Heart right ventricle (tissue), 16 donors: ENCODE measurements at regions of chr5 and their contacts with region 1.

Region 1: DNA sequence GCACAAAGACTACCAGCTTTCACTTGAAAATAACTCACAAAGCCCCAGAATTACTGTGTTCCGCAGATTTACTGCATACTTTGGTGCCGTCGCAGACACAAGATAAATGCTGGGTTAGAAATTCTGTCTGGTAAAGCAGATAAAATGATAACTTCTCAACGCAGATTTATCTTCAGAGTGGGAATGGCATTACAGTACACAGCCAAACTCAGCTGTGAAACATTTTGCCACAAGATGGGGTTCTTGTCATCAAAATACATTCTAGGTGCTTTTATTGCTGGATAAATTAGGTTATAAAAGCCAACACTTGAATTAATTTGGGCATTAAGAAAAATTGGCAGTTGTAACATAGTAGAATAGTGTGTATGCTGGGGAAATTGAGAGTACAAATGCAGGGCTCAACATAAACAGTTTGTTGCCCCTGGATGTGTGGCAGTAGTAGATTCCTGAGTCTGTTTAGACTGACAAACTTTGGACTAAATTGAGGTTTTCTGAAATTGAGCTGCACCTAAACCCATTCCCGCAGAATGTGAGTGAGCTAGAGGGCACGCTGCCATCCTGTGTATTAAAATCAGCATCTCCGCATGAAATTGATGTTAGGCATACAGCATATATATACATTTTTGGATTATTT is 61.1 kb downstream of the LMNB1 start:
- DNase-seq: no peak
- ATAC-seq: peak in 5 of 8 donors; percentile 50 to 55 (median 53)
- H3K4me3 ChIP-seq: no peak overlapping the region
- H3K27ac ChIP-seq: no peak overlapping the region
- H3K4me1 ChIP-seq: no peaks in the 10 kb centered on the region
- H3K27me3 ChIP-seq: no peaks in the 10 kb centered on the region
- CTCF ChIP-seq: peak in 8 of 9 donors; percentile 17 to 74 (median 64)

Region 2: GRCh38 chr5:126875303-126875785 is 37.3 kb after region 1 on chr5:
- intact Hi-C with region 1: no loop called
- DNase-seq: no peak
- ATAC-seq: peak in 3 of 8 donors; percentile 40 to 55 (median 53)
- H3K4me3 ChIP-seq: no peak overlapping the region
- H3K27ac ChIP-seq: peak overlapping the region in 1 of 10 donors; percentile 8
- H3K4me1 ChIP-seq: peaks cover 0 to 28% (median 4%) of the 10 kb centered on the region in 9 donors
- H3K27me3 ChIP-seq: no peaks in the 10 kb centered on the region
- CTCF ChIP-seq: no peak

Region 3: GRCh38 chr5:127014573-127014972 is 176.6 kb after region 1 on chr5:
- intact Hi-C with region 1: no loop called
- DNase-seq: no peak
- ATAC-seq: no peak
- H3K4me3 ChIP-seq: no peak overlapping the region
- H3K27ac ChIP-seq: no peak overlapping the region
- H3K4me1 ChIP-seq: peaks cover 0 to 53% (median 38%) of the 10 kb centered on the region in 9 donors
- H3K27me3 ChIP-seq: no peaks in the 10 kb centered on the region
- CTCF ChIP-seq: no peak

Region 4: DNA sequence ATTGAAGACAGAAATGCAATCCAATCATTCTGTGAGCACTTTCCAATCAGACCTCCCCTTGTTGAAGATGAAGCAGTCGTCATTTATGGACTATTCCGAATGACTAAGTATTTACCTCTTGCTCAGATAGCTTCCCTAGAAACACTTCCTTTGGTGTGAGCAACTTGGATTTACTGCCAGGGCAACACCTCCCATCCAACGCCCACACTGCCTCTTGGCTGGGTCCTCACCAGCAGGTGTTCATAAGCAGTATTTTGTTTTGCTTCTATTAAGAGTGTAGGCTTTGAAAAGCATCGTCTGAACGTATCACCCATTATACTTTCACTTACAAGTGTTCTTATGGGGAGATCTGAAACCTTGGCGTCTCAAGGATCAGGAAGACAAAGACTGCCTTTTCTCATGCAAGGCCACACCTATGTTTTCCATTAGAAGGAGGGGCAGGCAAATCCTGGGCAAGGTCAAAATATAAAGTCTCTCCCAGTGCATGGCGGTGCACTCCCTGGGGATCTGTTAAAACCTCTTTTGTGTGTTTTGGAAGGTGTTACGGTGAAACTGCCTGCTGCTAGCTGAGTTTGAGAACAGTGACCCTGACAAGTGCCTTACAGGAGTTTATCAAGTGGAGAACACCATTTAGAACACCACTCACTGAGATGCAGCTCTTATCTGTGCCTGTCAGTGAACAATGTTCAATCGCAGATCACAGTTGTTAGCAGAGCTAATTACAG is 202.9 kb after region 1 on chr5:
- intact Hi-C with region 1: loop called in 4 of 10 experiments (anchors 5 to 10 kb)
- DNase-seq: no peak
- ATAC-seq: peak; percentile 13 to 79 (median 68)
- H3K4me3 ChIP-seq: peak overlapping the region in 2 of 10 donors; percentile 1 to 6
- H3K27ac ChIP-seq: peak overlapping the region in 8 of 10 donors; percentile 1 to 63 (median 36)
- H3K4me1 ChIP-seq: peaks cover 3 to 39% (median 26%) of the 10 kb centered on the region in 9 donors
- H3K27me3 ChIP-seq: no peaks in the 10 kb centered on the region
- CTCF ChIP-seq: no peak

Region 5: DNA sequence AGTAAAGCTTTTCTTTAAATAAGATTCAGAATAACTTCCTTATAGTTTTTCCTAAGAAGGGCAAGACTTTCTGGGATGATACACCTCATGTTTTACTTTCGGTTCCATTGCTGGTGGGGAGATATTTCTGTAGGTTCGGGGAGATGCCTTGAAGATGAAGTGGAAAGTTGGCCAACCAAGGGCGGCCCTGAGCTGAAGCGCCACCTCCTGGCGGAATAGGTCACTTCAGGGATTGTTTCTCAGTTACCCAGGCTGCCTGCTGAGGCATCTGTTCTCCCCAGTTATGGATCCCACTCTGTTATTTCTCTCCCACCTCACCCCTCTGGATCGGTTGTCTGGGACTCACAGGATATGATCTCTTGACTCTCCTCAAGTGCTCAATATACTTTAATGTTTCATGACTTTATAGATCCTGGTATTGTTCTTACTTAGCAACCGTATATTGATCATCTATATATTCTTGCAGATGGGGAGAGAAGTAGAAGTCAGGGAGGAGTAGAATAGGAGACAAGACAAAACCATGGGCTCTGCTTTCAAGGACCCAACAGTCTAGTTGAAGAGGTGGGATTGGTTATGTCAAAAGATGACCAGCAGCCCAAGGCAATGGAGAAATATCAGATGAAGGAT is 475.9 kb after region 1 on chr5:
- intact Hi-C with region 1: loop called (anchors 1 to 10 kb)
- DNase-seq: peak; percentile 48 to 53
- ATAC-seq: peak in 5 of 8 donors; percentile 42 to 64 (median 53)
- H3K4me3 ChIP-seq: no peak overlapping the region
- H3K27ac ChIP-seq: no peak overlapping the region
- H3K4me1 ChIP-seq: no peaks in the 10 kb centered on the region
- H3K27me3 ChIP-seq: peaks cover 0 to 3% (median 0%) of the 10 kb centered on the region in 7 donors
- CTCF ChIP-seq: peak; percentile 52 to 89 (median 82)

Region 6: DNA sequence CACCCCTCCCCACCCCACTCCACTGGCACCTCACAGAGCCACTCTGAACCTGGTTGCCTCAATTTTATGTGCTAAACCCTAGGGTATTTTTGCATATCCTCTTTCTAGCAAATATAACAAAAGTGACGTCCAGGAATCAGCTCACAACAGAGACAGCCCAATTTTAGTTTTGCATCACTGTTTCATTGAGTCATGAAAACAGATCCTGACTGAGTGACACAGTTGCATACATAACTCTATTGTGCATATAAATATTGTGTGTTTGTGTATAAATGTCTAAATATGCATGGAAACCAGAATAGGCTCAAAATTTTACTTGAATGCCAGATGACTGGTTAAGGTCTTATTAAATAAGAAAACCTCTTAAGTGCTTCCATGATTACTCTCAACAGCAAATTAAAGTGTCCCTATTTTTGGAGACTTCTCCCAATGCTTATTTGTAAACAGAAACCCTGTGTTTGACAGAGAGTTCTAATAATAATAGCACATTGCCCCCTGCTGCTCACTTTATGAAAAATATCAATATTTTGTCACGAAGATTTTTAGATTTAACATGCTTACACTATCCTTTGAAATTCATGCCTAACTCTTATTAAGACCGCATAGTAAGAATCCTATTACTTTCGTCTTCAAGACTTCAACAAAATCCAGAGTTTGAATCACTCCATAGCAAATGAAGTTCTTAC is 603.9 kb after region 1 on chr5:
- intact Hi-C with region 1: loop called in 1 of 10 experiments (anchors 5 kb)
- DNase-seq: no peak
- ATAC-seq: no peak
- H3K4me3 ChIP-seq: no peak overlapping the region
- H3K27ac ChIP-seq: no peak overlapping the region
- H3K4me1 ChIP-seq: no peaks in the 10 kb centered on the region
- H3K27me3 ChIP-seq: peaks cover 0 to 11% (median 0%) of the 10 kb centered on the region in 7 donors
- CTCF ChIP-seq: peak in 5 of 9 donors; percentile 20 to 42 (median 28)

Region 7: GRCh38 chr5:127486471-127486870 is 648.4 kb after region 1 on chr5:
- intact Hi-C with region 1: loop called in 4 of 10 experiments (anchors 5 to 10 kb)
- DNase-seq: no peak
- ATAC-seq: no peak
- H3K4me3 ChIP-seq: no peak overlapping the region
- H3K27ac ChIP-seq: no peak overlapping the region
- H3K4me1 ChIP-seq: no peaks in the 10 kb centered on the region
- H3K27me3 ChIP-seq: peaks cover 0 to 29% (median 9%) of the 10 kb centered on the region in 7 donors
- CTCF ChIP-seq: no peak

Region 8: DNA sequence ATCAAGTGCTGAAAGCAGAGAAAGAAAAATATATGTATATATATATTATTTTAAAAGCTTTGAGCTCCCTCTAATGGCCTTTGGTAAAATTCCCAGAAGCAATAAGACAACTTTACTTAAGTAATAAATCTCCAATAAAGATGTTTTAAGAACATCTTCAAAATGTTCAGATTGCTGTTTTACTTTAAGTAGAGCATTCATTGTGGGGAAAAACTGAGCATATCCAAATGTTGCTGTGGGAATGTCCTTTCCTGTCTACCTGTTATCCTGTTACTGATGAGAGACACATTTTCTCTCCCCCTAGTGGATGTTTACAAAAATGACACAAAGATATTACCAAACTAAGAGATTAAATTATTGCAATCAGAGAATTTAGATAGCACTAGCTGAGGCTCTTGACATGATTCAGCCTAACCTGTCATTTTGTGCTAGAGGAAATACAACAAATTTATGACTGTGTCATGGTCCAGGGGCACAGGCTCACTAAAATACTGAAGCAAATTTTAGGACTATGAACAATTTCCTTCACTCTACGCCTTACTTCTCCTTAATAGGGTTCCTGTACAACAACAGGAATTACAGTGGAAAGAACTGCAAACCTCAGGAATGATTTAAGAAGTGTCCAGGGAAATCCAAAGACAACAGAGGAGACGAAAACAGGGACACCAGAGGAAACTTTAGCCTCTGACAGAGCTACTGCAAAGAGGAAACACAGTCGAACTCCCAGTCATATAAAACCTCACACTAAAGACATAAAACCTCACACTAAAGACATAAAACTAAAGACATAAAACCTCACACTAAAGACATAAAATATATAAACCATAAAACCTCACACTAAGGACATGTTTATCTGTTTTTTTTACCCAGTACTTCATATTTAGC is 655.1 kb after region 1 on chr5:
- intact Hi-C with region 1: loop called in 4 of 10 experiments (anchors 5 to 10 kb)
- DNase-seq: no peak
- ATAC-seq: peak in 1 of 8 donors; percentile 35
- H3K4me3 ChIP-seq: no peak overlapping the region
- H3K27ac ChIP-seq: no peak overlapping the region
- H3K4me1 ChIP-seq: no peaks in the 10 kb centered on the region
- H3K27me3 ChIP-seq: peaks cover 0 to 41% (median 9%) of the 10 kb centered on the region in 7 donors
- CTCF ChIP-seq: peak; percentile 39 to 79 (median 70)